ENCODE measurements at regions of chr4 and their contacts with region 1.

Region 1: GRCh38 chr4:159175085-159175988 is 72.5 kb downstream of the RAPGEF2 start:
- DNase-seq: peak; percentile 80
- ATAC-seq: peak; percentile 98
- H3K4me3 ChIP-seq: peak overlapping the region in 1 of 2 experiments; percentile 17; a peak in 1 of 4 replicates
- H3K27ac ChIP-seq: no peak overlapping the region; the same call in 1 of the 2 replicates
- H3K4me1 ChIP-seq: peaks cover 11 to 16% of the 10 kb centered on the region in 2 experiments; a peak in 3 of 4 replicates
- H3K27me3 ChIP-seq: no peaks in the 10 kb centered on the region
- CTCF ChIP-seq: peak; percentile 69 to 86 (median 82)
- POLR2A ChIP-seq: no peak
- RAD21 ChIP-seq: peak; percentile 94

Region 2: GRCh38 chr4:158729716-158730559 is 445.4 kb before region 1 on chr4:
- CTCF ChIA-PET with region 1: no interaction called
- POLR2A ChIA-PET with region 1: no interaction called
- RAD21 ChIA-PET with region 1: no interaction called
- intact Hi-C with region 1: loop called (anchors 1 kb)
- DNase-seq: peak; percentile 61
- ATAC-seq: peak; percentile 99
- H3K4me3 ChIP-seq: no peak overlapping the region
- H3K27ac ChIP-seq: no peak overlapping the region
- H3K4me1 ChIP-seq: no peaks in the 10 kb centered on the region
- H3K27me3 ChIP-seq: peaks cover 7% of the 10 kb centered on the region; the same call in 1 of the 2 replicates
- CTCF ChIP-seq: peak; percentile 71 to 86 (median 81)
- POLR2A ChIP-seq: no peak
- RAD21 ChIP-seq: peak; percentile 90

Region 3: DNA sequence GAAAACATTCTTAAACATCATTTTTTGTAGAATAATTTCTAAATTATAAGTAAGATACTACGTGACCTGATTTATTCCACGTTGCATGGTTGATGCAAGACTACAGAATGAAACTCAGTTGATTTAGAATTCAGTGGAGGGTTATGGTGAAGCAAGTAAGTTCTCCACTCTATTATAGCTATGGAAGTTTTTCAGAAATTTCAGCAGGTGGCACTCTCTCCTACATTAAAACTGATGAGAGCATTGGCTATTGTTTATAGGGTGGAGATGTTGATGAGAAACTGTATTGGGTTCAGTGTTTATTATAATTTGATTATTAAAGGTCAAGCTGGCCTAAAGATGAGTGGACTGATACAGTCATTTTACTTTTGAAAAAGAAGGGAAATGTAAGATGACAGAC is 318.5 kb before region 1 on chr4:
- CTCF ChIA-PET with region 1: interaction called, 6 read pairs
- POLR2A ChIA-PET with region 1: interaction called, 3 read pairs
- RAD21 ChIA-PET with region 1: interaction called in 1 of 2 experiments, 3 read pairs
- intact Hi-C with region 1: loop called (anchors 1 kb)
- DNase-seq: peak; percentile 26
- ATAC-seq: peak; percentile 95
- H3K4me3 ChIP-seq: no peak overlapping the region
- H3K27ac ChIP-seq: no peak overlapping the region
- H3K4me1 ChIP-seq: no peaks in the 10 kb centered on the region
- H3K27me3 ChIP-seq: no peaks in the 10 kb centered on the region
- CTCF ChIP-seq: peak; percentile 49 to 83 (median 67)
- POLR2A ChIP-seq: no peak
- RAD21 ChIP-seq: peak; percentile 91

Region 4: DNA sequence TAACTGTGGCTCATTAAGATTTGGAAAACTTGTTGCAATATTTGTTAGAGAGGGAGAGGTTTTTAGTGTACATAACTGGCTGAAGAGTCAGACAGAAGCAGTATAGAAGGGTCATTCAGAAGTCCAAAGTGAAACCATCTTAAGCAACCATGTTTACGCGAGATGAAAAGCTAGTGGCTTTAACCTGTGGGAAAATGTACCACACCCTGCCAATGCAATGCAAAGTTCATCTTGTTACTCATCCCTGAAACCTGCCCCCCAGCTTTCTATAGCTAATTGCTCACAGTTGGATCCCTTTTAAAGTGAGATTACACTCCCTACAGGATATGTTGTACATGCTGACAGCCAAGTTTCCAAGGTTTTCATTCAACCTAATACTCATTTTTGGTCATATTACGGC is 169.1 kb before region 1 on chr4:
- CTCF ChIA-PET with region 1: no interaction called
- POLR2A ChIA-PET with region 1: no interaction called
- RAD21 ChIA-PET with region 1: no interaction called
- intact Hi-C with region 1: loop called (anchors 10 kb)
- DNase-seq: peak; percentile 75
- ATAC-seq: peak; percentile 87
- H3K4me3 ChIP-seq: peak overlapping the region; percentile 4 to 49; a peak in 3 of 4 replicates
- H3K27ac ChIP-seq: no peak overlapping the region
- H3K4me1 ChIP-seq: peaks cover 6 to 30% of the 10 kb centered on the region in 2 experiments; a peak in 2 of 4 replicates
- H3K27me3 ChIP-seq: no peaks in the 10 kb centered on the region
- CTCF ChIP-seq: no peak
- POLR2A ChIP-seq: no peak
- RAD21 ChIP-seq: peak; percentile 24; the same call in 1 of the 2 replicates

Region 5: DNA sequence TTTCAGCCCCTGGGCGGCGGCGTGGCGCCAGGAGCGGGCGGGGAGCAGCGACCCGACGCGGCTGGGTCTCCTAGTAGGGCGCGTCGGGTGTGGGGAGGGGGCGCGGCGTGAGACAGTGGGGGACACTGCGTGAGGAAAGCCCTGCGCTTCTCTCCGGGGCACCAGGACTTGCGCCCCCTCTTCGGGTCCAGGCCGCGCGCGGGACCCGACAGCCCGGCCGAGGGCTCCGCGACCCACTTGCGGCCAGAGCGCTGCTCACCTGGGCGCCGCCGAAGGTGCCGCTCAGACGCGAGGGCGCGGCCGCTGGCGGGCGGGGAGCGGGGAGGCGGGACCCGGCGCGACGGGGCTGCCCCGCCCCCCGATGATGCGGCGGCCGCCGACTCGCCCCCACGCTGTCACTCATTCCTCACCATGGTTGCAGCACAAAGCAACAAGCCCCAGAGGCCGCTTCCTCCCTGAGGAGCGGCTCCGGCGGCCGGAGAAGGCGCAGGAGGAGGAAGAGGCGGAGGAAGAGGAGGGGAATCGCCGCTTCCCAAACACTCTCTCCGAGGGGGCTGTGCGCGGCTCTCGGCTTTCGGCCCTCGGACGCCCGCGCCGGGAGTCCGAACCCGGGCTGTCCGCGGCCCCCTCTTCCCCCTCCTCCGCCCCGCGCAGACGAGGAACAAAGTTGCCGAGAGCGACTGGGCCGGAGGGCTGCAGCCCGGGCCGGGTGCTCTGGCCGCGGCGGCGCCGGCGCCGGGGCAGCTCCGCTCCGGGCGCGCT is 72.5 kb before region 1 on chr4 and contains the start of gene RAPGEF2:
- CTCF ChIA-PET with region 1: no interaction called
- POLR2A ChIA-PET with region 1: no interaction called
- RAD21 ChIA-PET with region 1: no interaction called
- intact Hi-C with region 1: loop called (anchors 5 kb)
- DNase-seq: peak; percentile 89
- ATAC-seq: peak; percentile 89
- H3K4me3 ChIP-seq: peak within 1 kb of the TSS; percentile 72 to 82
- H3K27ac ChIP-seq: peak within 1 kb of the TSS; percentile 76
- H3K4me1 ChIP-seq: peaks cover 4 to 17% of the 10 kb centered on the region in 2 experiments; a peak in 3 of 4 replicates
- H3K27me3 ChIP-seq: no peaks in the 10 kb centered on the region
- CTCF ChIP-seq: no peak
- POLR2A ChIP-seq: peak; percentile 36
- RAD21 ChIP-seq: no peak
- total RNA-seq, gene RAPGEF2: 21.2 TPM

Region 6: GRCh38 chr4:159129814-159130550 is 45.4 kb before region 1 on chr4:
- CTCF ChIA-PET with region 1: no interaction called
- POLR2A ChIA-PET with region 1: no interaction called
- RAD21 ChIA-PET with region 1: no interaction called
- intact Hi-C with region 1: no loop called
- DNase-seq: no peak
- ATAC-seq: no peak
- H3K4me3 ChIP-seq: no peak overlapping the region
- H3K27ac ChIP-seq: no peak overlapping the region
- H3K4me1 ChIP-seq: no peaks in the 10 kb centered on the region; a peak in 1 of 4 replicates
- H3K27me3 ChIP-seq: no peaks in the 10 kb centered on the region
- CTCF ChIP-seq: no peak
- POLR2A ChIP-seq: no peak
- RAD21 ChIP-seq: no peak

Measured in HCT116 (cell line).